Activated CD8-positive, alpha-beta memory T cell treated with anti-CD3 and anti-CD28 coated beads, Interleukin-2, amount 10 ng/mL, durations not matched to agents 7 days and 5 days (primary cell): ENCODE measurements at regions of chr4 and their contacts with region 1.

Region 1: DNA sequence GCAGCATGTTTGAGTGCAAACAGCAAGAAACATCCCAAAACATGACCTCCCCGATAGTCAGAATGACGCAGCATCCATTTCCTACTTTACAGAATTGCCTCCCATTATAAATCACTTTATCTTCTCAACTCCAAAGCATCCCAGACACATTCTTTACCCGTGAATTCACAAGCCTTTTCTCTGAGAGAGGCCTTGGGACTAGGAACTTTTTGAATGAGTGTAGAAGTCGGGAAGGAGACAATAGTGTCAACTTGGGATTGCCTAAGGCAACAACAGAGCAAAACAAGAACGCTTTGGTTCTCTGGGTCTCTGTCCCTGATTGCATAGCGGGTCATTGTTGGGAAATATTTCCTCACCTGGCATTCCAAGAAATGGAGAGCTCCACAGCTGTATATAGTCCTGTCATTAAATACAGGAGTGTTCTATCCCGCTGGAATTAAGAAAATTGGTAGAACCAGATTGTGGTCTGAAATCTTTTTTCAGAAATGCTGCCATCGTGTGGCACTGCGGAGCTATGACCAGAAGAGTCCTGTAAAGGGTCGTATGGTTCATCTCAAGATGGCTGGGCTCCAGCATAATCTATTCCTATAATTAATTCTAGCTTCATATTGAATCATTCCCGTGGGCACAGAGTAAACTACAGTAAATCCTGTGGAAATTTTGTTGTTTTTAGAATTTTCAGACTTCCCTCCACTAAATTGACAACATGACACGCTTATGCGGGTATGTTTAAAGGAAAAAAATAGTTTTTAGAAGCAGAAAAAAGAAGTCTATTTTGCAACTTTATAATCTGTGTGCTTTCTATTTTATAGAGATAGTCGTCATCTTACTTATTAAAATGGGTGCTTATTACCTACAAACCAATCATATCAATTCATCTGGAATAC is 2.0 kb upstream of the SPP1 start:
- DNase-seq: peak; percentile 51
- ATAC-seq: peak; percentile 71
- H3K4me3 Mint-ChIP-seq: no peak overlapping the region
- H3K27ac Mint-ChIP-seq: no peak overlapping the region
- H3K4me1 Mint-ChIP-seq: peaks cover 9% of the 10 kb centered on the region
- H3K27me3 Mint-ChIP-seq: peaks cover 61% of the 10 kb centered on the region

Region 2: DNA sequence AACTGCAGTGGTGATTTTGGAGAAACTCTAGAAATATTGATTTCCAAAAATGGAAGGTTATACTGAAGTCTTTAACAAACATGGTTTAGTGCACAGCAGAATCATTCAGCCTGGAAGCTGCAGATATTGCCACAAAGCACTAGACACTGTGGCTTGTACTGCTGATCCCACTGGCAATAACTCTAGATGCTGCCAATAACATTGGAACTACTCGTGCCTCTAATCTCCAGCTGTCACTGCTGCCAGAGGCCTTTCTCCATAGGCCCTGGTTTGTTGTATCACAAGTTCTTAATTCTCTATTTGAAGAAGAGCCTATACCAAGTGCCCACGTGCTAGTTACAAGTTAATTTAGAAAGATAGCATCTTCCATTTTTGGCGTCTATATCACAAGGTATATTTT is 304.2 kb before region 1 on chr4:
- CTCF ChIA-PET with region 1: no interaction called
- DNase-seq: no peak
- ATAC-seq: no peak
- H3K4me3 Mint-ChIP-seq: no peak overlapping the region
- H3K27ac Mint-ChIP-seq: no peak overlapping the region
- H3K4me1 Mint-ChIP-seq: no peaks in the 10 kb centered on the region
- H3K27me3 Mint-ChIP-seq: peaks cover 23% of the 10 kb centered on the region

Region 3: GRCh38 chr4:87848622-87849351 is 124.7 kb before region 1 on chr4:
- CTCF ChIA-PET with region 1: interaction called, 22 read pairs
- DNase-seq: peak; percentile 54
- ATAC-seq: peak; percentile 94
- H3K4me3 Mint-ChIP-seq: peak overlapping the region; percentile 21
- H3K27ac Mint-ChIP-seq: no peak overlapping the region
- H3K4me1 Mint-ChIP-seq: peaks cover 13% of the 10 kb centered on the region
- H3K27me3 Mint-ChIP-seq: peaks cover 40% of the 10 kb centered on the region

Region 4: GRCh38 chr4:87962398-87962797 is 11.1 kb before region 1 on chr4:
- CTCF ChIA-PET with region 1: interaction called, 10 read pairs
- DNase-seq: no peak
- ATAC-seq: no peak
- H3K4me3 Mint-ChIP-seq: no peak overlapping the region
- H3K27ac Mint-ChIP-seq: no peak overlapping the region
- H3K4me1 Mint-ChIP-seq: no peaks in the 10 kb centered on the region
- H3K27me3 Mint-ChIP-seq: peaks cover 11% of the 10 kb centered on the region

Region 5: GRCh38 chr4:87985097-87985886 is 11.8 kb after region 1 on chr4:
- CTCF ChIA-PET with region 1: interaction called, 16 read pairs
- DNase-seq: peak; percentile 59
- ATAC-seq: peak; percentile 85
- H3K4me3 Mint-ChIP-seq: no peak overlapping the region
- H3K27ac Mint-ChIP-seq: no peak overlapping the region
- H3K4me1 Mint-ChIP-seq: peaks cover under 1% of the 10 kb centered on the region
- H3K27me3 Mint-ChIP-seq: peaks cover 37% of the 10 kb centered on the region